Breast epithelium (tissue), 4 donors: ENCODE measurements at regions of chr12 and their contacts with region 1.

Region 1: DNA sequence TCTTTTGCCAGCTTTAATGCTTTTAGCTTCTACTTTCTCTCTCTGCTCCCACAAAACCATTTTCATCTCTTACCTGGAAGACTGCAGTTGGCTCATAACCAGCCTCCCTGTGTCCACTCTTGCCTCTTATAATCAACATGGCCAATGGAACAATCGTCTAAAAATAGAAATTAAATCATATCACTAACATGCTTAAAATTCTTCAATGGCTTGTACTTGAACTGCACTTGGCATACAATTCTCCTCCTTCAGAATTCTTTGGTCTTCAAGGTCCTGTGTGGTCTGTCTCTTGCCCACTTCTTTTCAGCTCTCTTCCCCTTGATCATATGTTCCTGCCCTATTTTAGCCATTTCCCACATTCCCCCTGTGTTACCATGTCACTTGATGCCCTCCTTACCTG is 342.2 kb downstream of the ATP23 start:
- DNase-seq: no peak
- H3K4me3 ChIP-seq: no peak overlapping the region
- H3K27ac ChIP-seq: no peak overlapping the region
- H3K4me1 ChIP-seq: no peaks in the 10 kb centered on the region
- H3K27me3 ChIP-seq: no peaks in the 10 kb centered on the region
- CTCF ChIP-seq: no peak
- POLR2A ChIP-seq: no peak

Region 2: DNA sequence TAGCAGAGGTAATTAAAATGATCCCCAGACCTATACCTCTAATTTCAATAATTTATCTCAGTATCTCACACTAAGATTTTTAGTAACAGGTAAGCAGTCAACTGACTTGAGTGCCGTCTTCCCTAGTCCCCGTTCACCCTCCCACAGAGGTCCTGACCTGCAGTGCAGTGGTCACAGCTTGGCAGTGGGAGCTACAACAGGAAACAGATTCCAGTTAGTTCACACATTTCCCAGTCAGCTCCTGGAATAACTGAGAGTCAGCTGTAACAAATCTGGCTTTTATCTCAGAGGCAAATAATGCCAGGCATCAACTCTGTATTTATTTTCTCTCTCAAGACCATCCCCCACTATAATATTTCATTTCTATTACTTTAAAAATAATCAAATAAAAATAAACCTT is 33.9 kb before region 1 on chr12:
- intact Hi-C with region 1: loop called (anchors 2 kb)
- DNase-seq: no peak
- H3K4me3 ChIP-seq: no peak overlapping the region
- H3K27ac ChIP-seq: no peak overlapping the region
- H3K4me1 ChIP-seq: no peaks in the 10 kb centered on the region
- H3K27me3 ChIP-seq: no peaks in the 10 kb centered on the region
- CTCF ChIP-seq: no peak
- POLR2A ChIP-seq: no peak